ENCODE measurements at regions of chr16 and their contacts with region 1.

Region 1: DNA sequence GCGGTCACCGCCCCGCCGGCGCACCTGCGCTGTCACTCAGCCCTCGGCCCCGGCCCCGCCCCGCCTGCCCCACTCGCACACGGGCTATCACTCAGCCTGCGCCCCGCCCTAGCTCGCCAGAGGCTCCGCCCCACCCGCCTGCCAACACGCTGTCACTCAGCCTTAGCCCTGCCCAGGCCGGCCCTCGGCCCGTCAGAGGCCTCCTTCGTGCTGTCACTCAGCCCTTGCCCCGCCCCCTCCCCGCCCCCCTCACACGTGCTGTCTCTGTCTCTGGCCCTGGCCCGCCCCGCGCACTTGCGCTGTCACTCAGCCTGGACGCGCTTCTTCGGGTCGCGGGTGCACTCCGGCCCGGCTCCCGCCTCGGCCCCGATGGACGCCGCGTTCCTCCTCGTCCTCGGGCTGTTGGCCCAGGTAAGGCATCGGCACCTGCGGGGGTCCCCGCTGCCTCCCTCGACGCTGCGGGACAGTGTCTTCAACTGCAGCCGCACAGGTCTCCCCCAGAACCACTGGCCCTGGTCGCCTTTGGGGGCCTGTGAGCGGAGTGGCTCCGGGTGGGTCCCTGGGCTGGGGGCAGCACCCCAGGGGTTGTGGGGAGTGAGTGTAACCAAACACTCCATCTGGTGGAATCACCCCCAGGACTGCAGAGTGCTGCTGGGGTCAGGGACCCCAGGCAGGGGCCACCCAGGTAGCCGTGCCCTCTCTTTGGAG is at the start of gene CDH15:
- DNase-seq: peak; percentile 98
- ATAC-seq: peak; percentile 90
- H3K4me3 ChIP-seq: peak within 1 kb of the TSS; percentile 38 to 54
- H3K27ac ChIP-seq: peak within 1 kb of the TSS; percentile 41; the same call in 1 of the 2 replicates
- H3K4me1 ChIP-seq: peaks cover 24 to 40% of the 10 kb centered on the region in 2 experiments
- H3K27me3 ChIP-seq: no peaks in the 10 kb centered on the region
- CTCF ChIP-seq: no peak
- POLR2A ChIP-seq: no peak
- RAD21 ChIP-seq: no peak
- total RNA-seq, gene CDH15: 3.8 TPM

Region 2: GRCh38 chr16:88811769-88812512 is 359.7 kb before region 1 on chr16 and contains the start of gene APRT:
- CTCF ChIA-PET with region 1: interaction called, 16 read pairs
- POLR2A ChIA-PET with region 1: interaction called, 11 read pairs
- RAD21 ChIA-PET with region 1: interaction called, 3 to 4 read pairs
- intact Hi-C with region 1: loop called (anchors 1 kb)
- DNase-seq: peak; percentile 91
- ATAC-seq: peak; percentile 64
- H3K4me3 ChIP-seq: peak within 1 kb of the TSS; percentile 72 to 75
- H3K27ac ChIP-seq: peak within 1 kb of the TSS; percentile 100
- H3K4me1 ChIP-seq: peaks cover 22 to 59% of the 10 kb centered on the region in 2 experiments
- H3K27me3 ChIP-seq: no peaks in the 10 kb centered on the region
- CTCF ChIP-seq: peak in 2 of 3 experiments; percentile 35; a peak in 4 of 6 replicates
- POLR2A ChIP-seq: peak; percentile 77
- RAD21 ChIP-seq: no peak
- total RNA-seq, gene APRT: 311 TPM

Region 3: DNA sequence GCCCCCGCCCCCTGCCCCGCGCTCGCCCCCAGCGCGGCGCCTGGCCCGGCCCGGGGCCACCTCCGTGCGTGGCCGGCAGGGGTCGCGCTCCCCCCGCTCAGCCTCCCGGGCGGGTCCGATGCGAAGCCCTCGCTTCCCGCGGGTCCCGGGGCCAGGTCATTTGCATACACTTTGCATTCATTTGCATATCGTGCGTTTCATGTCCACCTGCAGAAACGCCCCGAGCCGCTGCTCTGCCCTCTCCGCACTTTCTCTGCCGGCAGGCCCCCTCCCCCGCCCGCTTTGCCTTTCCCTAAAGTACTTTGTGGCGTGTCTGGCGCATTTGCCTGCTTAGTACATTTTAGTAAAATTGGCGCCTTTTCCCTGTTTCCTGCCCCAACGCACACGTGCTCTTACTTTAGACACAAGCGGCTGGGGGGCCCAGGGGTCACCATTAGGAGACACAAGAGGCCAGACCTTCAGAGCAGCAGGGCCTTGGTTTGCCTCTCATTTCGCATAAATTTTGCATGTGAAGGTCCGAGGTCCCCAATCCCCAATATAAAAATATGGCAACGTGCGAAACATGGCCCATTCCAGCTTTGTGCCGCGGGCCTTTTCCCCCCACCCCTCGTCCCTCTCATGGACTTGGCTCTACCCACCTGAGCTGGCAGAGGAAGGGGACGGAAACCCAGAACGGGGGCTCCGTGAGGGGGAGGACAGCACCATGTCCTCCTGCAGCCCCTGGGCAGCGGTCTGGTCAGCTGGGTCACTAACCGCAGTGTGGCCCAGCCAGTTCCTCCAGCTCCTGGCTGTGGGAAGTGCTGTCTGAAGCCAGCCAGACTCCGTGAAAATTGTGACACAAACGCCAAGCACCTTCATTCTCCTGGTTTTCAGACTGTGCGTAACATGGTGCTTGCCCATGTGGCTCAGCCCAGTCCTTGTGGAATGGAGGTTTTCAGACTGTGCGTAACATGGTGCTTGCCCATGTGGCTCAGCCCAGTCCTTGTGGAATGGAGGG is 229.4 kb before region 1 on chr16:
- CTCF ChIA-PET with region 1: interaction called, 7 read pairs
- POLR2A ChIA-PET with region 1: interaction called, 5 read pairs
- RAD21 ChIA-PET with region 1: interaction called in 1 of 2 experiments, 4 read pairs
- intact Hi-C with region 1: loop called (anchors 1 kb)
- DNase-seq: peak; percentile 36
- ATAC-seq: peak; percentile 83
- H3K4me3 ChIP-seq: peak overlapping the region; percentile 5 to 29
- H3K27ac ChIP-seq: no peak overlapping the region
- H3K4me1 ChIP-seq: peaks cover 0 to 18% of the 10 kb centered on the region in 2 experiments; a peak in 2 of 4 replicates
- H3K27me3 ChIP-seq: no peaks in the 10 kb centered on the region
- CTCF ChIP-seq: peak; percentile 41 to 78 (median 51); a peak in 5 of 6 replicates
- POLR2A ChIP-seq: no peak
- RAD21 ChIP-seq: peak; percentile 75

Region 4: DNA sequence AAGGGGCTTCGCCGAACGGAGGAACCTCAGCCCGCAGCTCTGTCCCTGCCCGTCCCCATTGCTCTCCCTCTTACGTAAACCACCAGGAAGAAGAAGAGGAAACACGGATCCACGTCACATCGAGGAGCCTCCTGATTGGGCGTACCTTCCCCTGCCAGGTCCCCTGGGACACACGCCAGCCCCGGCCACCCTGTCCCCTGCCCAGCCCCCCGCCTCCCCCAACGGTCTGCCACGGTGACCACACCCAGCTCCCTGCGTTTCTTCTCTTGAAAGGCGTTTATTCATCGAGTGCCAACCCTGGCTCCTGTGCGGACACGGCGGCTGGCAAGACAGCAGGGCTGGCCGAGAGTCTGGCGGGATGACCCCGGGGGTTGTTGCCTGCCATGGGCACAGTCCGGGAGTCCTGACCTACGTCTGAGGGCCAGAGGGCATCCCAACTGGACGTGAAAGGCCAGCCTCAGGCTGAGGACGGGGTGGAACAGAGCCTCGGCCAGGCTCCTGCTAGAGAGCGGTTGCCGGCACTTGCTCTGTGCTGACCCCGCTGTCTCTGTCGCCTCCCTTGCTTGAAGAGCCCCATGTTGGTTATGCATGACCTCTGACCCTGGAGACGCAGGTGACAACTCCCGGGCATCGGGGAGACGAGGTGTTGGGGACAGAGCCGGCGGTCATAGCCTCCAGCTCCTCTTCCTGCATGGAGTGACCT is 118.6 kb before region 1 on chr16:
- CTCF ChIA-PET with region 1: interaction called, 9 read pairs
- POLR2A ChIA-PET with region 1: no interaction called
- RAD21 ChIA-PET with region 1: interaction called, 5 to 8 read pairs
- intact Hi-C with region 1: loop called (anchors 5 kb)
- DNase-seq: peak; percentile 92
- ATAC-seq: peak; percentile 86
- H3K4me3 ChIP-seq: peak overlapping the region; percentile 77 to 97
- H3K27ac ChIP-seq: peak overlapping the region; percentile 75
- H3K4me1 ChIP-seq: peaks cover 13 to 28% of the 10 kb centered on the region in 2 experiments
- H3K27me3 ChIP-seq: no peaks in the 10 kb centered on the region
- CTCF ChIP-seq: no peak; a peak in 1 of 6 replicates
- POLR2A ChIP-seq: peak; percentile 80
- RAD21 ChIP-seq: no peak

Region 5: GRCh38 chr16:89084411-89084810 is 87.2 kb before region 1 on chr16:
- CTCF ChIA-PET with region 1: no interaction called
- POLR2A ChIA-PET with region 1: no interaction called
- RAD21 ChIA-PET with region 1: no interaction called
- intact Hi-C with region 1: no loop called
- DNase-seq: no peak
- ATAC-seq: no peak
- H3K4me3 ChIP-seq: no peak overlapping the region
- H3K27ac ChIP-seq: no peak overlapping the region
- H3K4me1 ChIP-seq: no peaks in the 10 kb centered on the region
- H3K27me3 ChIP-seq: peaks cover 2% of the 10 kb centered on the region; the same call in 1 of the 2 replicates
- CTCF ChIP-seq: no peak
- POLR2A ChIP-seq: no peak
- RAD21 ChIP-seq: no peak

Region 6: DNA sequence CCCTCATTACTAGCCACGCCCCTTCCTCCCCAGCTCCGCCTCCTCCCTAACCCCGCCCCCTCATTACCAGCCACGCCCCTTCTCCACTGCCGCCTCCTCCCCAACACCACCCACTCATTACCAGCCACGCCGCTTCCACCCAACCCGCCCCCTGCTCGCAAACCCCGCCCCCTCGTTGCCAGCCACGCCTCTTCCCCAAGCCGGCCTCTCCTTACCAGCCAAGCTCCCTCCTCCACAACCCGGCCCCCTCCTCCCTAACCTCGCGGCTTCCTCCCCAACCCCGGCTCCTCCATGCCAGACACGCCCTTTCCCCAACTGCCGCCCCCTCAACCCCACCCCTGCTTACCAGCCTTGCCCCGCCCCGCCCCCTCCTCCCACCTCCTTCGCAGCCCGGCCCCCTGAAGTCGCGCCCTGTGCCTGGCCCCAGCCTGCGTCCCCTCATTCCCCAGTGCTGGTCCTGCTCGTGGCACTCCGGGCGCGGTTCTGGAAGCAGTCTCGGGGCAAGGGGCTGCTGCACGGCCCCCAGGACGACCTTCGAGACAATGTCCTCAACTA is 21.5 kb after region 1 on chr16:
- CTCF ChIA-PET with region 1: interaction called, 11 read pairs
- POLR2A ChIA-PET with region 1: interaction called, 12 read pairs
- RAD21 ChIA-PET with region 1: interaction called, 5 read pairs
- intact Hi-C with region 1: loop called (anchors 1 kb)
- DNase-seq: peak; percentile 94
- ATAC-seq: peak; percentile 80
- H3K4me3 ChIP-seq: peak overlapping the region; percentile 19 to 26; a peak in 2 of 4 replicates
- H3K27ac ChIP-seq: no peak overlapping the region; the same call in 1 of the 2 replicates
- H3K4me1 ChIP-seq: peaks cover 0 to 16% of the 10 kb centered on the region in 2 experiments; a peak in 2 of 4 replicates
- H3K27me3 ChIP-seq: no peaks in the 10 kb centered on the region
- CTCF ChIP-seq: no peak
- POLR2A ChIP-seq: no peak
- RAD21 ChIP-seq: no peak

Region 7: GRCh38 chr16:89201439-89202377 is 30.1 kb after region 1 on chr16:
- CTCF ChIA-PET with region 1: interaction called, 4 read pairs
- POLR2A ChIA-PET with region 1: interaction called, 4 read pairs
- RAD21 ChIA-PET with region 1: no interaction called
- intact Hi-C with region 1: loop called (anchors 2 kb)
- DNase-seq: peak; percentile 84
- ATAC-seq: peak; percentile 92
- H3K4me3 ChIP-seq: peak overlapping the region; percentile 53 to 57
- H3K27ac ChIP-seq: peak overlapping the region; percentile 60; the same call in 1 of the 2 replicates
- H3K4me1 ChIP-seq: peaks cover 5 to 22% of the 10 kb centered on the region in 2 experiments
- H3K27me3 ChIP-seq: no peaks in the 10 kb centered on the region
- CTCF ChIP-seq: no peak
- POLR2A ChIP-seq: peak; percentile 18
- RAD21 ChIP-seq: no peak

Region 8: GRCh38 chr16:89230255-89230654 is 58.6 kb after region 1 on chr16:
- CTCF ChIA-PET with region 1: no interaction called
- POLR2A ChIA-PET with region 1: no interaction called
- RAD21 ChIA-PET with region 1: no interaction called
- intact Hi-C with region 1: no loop called
- DNase-seq: no peak
- ATAC-seq: no peak
- H3K4me3 ChIP-seq: no peak overlapping the region
- H3K27ac ChIP-seq: no peak overlapping the region
- H3K4me1 ChIP-seq: no peaks in the 10 kb centered on the region
- H3K27me3 ChIP-seq: no peaks in the 10 kb centered on the region
- CTCF ChIP-seq: no peak
- POLR2A ChIP-seq: no peak
- RAD21 ChIP-seq: no peak

Region 9: DNA sequence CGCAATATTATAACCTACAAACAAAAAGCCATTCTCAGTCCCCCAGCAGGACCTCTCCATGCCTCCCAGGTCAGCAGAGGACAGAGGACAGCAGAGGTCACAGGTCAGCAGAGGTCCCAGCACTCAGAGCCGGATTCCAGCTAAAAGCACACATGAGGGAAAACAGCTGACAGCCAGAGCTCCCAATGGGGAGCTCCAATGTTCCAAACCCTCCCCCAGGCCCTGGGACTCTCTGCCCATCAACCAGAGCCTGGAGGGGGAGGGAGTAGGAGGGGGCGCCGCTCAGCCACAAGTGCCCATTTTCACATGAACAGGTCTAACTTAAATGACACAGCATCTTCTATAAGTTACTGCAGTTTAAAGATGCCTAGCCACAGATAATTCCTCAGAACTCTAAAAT is 241.2 kb after region 1 on chr16:
- CTCF ChIA-PET with region 1: no interaction called
- POLR2A ChIA-PET with region 1: no interaction called
- RAD21 ChIA-PET with region 1: no interaction called
- intact Hi-C with region 1: no loop called
- DNase-seq: no peak
- ATAC-seq: no peak
- H3K4me3 ChIP-seq: no peak overlapping the region
- H3K27ac ChIP-seq: no peak overlapping the region
- H3K4me1 ChIP-seq: peaks cover 6 to 31% of the 10 kb centered on the region in 2 experiments
- H3K27me3 ChIP-seq: no peaks in the 10 kb centered on the region
- CTCF ChIP-seq: no peak
- POLR2A ChIP-seq: no peak
- RAD21 ChIP-seq: no peak